ENCODE measurements at regions of chr1 and their contacts with region 1.

Region 1: DNA sequence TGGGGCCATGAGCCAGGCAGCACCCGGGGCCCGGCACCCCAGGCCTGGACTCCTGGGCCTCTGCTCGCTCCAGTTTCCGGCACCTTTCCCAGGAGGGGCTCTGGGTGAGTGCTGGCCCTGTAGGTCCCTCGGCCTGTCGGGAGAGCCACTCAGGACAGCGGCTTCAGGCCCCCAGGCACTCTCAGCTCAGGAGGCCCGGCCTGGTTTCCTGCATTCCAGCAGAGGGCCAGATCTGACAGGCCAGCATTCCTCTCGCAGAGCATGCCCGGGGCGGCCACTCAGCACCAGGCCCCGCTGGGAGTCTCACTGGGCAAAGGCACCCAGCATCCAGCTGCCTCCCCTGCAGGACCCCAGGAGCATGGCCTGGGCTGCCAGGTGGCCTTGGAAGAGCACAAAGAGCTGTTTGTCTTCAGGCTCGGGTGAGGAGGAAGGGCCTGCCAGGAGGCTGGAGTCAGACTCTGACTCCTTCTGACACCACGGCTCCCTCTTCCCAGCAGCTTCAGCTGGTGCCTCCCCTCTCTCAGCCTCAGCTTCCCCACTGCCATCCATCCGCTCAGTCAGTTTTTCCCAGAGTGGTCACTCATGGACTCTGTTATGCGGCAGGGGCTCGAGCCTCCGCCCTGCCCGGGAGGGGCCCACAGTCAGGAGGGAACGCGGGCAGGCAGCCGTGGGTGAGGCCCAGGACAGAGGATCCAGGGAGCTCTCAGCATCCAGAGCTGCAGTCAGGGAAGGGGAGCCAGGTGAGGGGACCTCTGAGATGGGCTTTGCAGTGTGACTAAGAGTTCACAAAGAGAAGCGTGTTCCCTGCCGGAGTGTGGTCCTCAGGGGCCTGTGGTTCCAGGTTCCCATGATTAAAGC is 51.7 kb downstream of the WNT9A start:
- DNase-seq: no peak
- ATAC-seq: peak; percentile 71
- H3K4me3 ChIP-seq: no peak overlapping the region
- H3K27ac ChIP-seq: peak overlapping the region; percentile 57
- H3K4me1 ChIP-seq: peaks cover 38% of the 10 kb centered on the region
- H3K27me3 ChIP-seq: no peaks in the 10 kb centered on the region
- CTCF ChIP-seq: no peak

Region 2: GRCh38 chr1:227787513-227788270 is 108.4 kb before region 1 on chr1:
- CTCF ChIA-PET with region 1: interaction called, 10 read pairs
- POLR2A ChIA-PET with region 1: no interaction called
- in situ Hi-C with region 1: no loop called
- intact Hi-C with region 1: no loop called
- DNase-seq: peak; percentile 51
- ATAC-seq: peak; percentile 92
- H3K4me3 ChIP-seq: peak overlapping the region; percentile 67 to 82
- H3K27ac ChIP-seq: peak overlapping the region; percentile 79
- H3K4me1 ChIP-seq: peaks cover 22% of the 10 kb centered on the region
- H3K27me3 ChIP-seq: no peaks in the 10 kb centered on the region
- CTCF ChIP-seq: no peak

Region 3: DNA sequence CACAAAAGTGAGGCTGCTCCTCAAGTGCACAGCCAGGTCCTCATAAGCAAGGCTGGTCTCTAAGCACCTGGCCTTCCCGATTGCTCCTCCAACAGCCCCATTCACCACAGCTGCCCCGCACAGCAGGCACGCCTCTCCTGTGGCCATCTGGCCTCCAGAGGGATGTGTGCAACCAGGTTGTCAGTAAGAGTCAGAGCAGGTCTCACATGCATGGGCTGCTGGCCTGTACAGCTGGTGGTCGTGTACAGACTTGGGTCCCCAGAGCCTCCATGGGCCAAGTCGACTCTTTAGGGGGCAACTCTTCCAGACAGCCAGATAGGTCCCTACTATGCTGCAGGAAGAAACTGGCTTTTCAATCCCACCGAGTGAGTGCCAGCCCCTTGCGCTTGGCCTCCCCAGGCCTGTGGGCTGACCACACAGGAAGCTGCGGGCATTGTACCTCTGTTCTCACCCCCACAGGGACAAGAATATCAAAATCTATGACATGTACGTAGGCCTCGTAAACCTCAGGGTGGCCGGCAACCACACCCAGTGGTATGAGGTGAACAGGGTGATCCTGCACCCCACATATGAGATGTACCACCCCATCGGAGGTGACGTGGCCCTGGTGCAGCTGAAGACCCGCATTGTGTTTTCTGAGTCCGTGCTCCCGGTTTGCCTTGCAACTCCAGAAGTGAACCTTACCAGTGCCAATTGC is 79.2 kb before region 1 on chr1:
- CTCF ChIA-PET with region 1: interaction called, 10 read pairs
- POLR2A ChIA-PET with region 1: no interaction called
- in situ Hi-C with region 1: no loop called
- intact Hi-C with region 1: no loop called
- DNase-seq: no peak
- ATAC-seq: no peak
- H3K4me3 ChIP-seq: no peak overlapping the region
- H3K27ac ChIP-seq: no peak overlapping the region
- H3K4me1 ChIP-seq: no peaks in the 10 kb centered on the region
- H3K27me3 ChIP-seq: no peaks in the 10 kb centered on the region
- CTCF ChIP-seq: no peak

Measured in Panc1 (cell line).